ENCODE measurements at regions of chr16 and their contacts with region 1.

Region 1: DNA sequence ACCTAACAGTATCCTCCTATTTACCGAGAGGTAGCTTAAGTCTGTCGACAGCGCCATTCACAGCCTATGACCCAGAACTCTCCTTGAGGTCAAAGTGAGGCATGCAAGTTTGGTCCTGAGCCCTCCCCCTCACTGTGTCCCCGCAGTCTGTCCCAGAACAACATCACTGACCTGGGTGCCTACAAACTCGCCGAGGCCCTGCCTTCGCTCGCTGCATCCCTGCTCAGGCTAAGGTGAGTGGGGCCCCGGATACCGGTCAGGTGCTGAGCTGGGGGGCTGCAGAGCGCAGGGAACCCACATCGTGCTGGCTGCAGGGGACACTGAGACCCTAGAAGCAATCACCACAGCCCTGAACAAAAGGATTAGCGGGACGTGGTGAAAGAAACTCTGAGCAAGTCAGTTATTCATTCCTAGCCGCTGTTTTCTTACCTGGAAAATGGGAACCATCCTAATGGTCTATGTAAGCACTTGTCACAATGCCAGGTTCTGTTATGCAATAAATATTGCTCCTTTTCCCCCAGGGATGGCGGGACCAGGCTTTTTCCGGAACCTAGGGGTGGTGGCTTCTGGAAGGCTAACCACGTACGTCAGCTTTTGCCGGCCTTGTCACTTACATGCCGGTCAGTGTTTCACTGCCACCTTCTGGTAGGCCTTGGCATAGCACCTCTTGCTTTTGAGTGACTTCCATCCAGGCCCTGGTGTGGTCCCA is 23.8 kb downstream of the DEXI start:
- DNase-seq: peak; percentile 97

Region 2: GRCh38 chr16:10743610-10744393 is 174.6 kb before region 1 on chr16 and contains the start of gene NUBP1:
- intact Hi-C with region 1: loop called in 1 of 2 experiments (anchors 5 kb)
- DNase-seq: peak; percentile 100
- total RNA-seq, gene NUBP1: 27.1 to 29.8 TPM

Region 3: GRCh38 chr16:10752843-10753523 is 165.5 kb before region 1 on chr16:
- intact Hi-C with region 1: loop called (anchors 5 to 10 kb)
- DNase-seq: peak; percentile 85

Region 4: DNA sequence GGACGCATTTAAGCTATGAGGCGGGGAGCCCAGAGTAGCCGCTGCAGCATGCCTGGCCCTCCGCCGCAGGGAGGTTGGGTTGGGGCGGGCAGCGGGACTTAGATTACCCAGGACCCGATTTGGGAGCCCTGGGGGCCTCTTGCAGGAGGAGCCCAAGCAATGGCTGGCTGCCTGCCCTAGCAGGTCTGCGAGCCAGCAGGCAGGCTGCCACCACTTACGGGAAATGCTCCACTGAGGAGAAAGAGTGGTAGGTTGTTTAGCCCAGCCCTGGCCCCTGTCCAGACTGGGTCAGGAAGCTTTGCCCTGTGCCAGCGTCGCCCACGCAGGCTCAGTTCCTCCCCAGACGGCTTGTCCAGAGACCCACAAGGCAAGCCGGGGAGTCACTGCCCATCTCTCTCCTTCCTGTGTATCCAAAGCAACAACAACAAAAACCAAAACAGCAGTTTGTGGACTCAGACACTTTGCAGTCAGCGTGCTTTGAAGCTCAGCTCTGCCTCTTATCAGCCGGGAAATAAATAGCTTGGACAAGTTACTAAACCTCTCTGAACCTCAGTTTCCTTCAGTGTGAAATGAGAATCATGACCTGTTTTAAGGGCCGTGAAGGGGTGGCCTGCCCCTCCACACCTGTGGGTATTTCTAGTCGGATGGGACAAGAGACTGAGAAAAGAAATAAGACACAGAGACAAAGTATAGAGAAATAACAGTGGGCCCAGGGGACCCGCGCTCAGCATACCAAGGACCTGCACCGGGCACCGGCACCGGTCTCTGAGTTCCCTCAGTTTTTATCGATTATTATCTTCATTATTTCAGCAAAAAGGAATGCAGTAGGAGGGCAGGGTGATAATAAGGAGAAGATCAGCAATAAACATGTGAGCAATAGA is 89.4 kb before region 1 on chr16:
- intact Hi-C with region 1: no loop called
- DNase-seq: peak; percentile 98